Gastrocnemius medialis (tissue), 4 donors: ENCODE measurements at regions of chr5 and their contacts with region 1.

Region 1: DNA sequence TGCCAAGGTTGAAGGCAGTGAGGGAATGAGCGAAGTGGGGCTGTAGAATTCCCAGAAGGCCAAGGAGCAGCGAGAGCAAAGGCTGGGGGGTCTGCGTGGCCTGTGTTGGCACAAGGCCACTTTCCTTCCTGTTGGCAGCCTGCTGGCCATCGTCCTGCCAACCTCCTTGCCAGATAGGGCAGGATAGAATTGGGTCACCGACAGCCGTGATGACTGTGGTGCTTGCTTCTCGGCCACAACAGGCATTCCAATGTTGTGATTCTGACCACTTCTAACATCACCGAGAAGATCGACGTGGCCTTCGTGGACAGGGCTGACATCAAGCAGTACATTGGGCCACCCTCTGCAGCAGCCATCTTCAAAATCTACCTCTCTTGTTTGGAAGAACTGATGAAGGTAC is 18.9 kb downstream of the TRIP13 start:
- DNase-seq: no peak
- ATAC-seq: no peak
- H3K4me3 ChIP-seq: no peak overlapping the region
- H3K27ac ChIP-seq: no peak overlapping the region
- H3K4me1 ChIP-seq: no peaks in the 10 kb centered on the region
- H3K27me3 ChIP-seq: no peaks in the 10 kb centered on the region
- CTCF ChIP-seq: no peak
- POLR2A ChIP-seq: no peak

Region 2: GRCh38 chr5:671459-672328 is 239.9 kb before region 1 on chr5:
- in situ Hi-C with region 1: loop called in 3 of 4 experiments (anchors 5 to 10 kb)
- intact Hi-C with region 1: loop called (anchors 1 kb)
- DNase-seq: peak; percentile 43 to 66
- ATAC-seq: peak; percentile 74 to 75
- H3K4me3 ChIP-seq: peak overlapping the region in 2 of 4 donors; percentile 9 to 36
- H3K27ac ChIP-seq: peak overlapping the region in 3 of 4 donors; percentile 12 to 84 (median 15)
- H3K4me1 ChIP-seq: peaks cover 36 to 47% of the 10 kb centered on the region in 2 donors
- H3K27me3 ChIP-seq: no peaks in the 10 kb centered on the region
- CTCF ChIP-seq: peak; percentile 89 to 98 (median 95)
- POLR2A ChIP-seq: no peak